ENCODE measurements at regions of chr4 and their contacts with region 1.

Region 1: DNA sequence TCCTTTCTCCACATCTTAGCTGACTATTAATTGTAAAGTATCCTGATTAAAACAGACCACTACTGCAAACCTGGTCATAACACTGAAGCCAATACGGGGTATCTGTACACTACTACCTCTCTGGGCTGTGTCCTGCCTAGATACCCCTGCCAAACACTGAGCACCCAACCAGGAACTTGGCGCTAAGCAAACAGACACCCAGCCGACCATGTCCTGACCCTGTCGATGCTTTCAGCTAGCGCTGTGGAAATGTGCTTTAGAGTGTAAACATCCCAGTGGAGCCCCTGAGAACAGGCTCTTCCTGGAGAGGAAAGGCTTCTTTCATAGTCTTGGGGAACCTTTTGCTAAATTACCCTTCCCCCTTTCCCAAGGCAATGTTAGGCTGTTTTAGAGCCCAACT is 52.9 kb downstream of the CCNG2 start:
- DNase-seq: no peak
- ATAC-seq: no peak
- H3K4me3 ChIP-seq: no peak overlapping the region
- H3K4me3 Mint-ChIP-seq: no peak overlapping the region
- H3K27ac ChIP-seq: no peak overlapping the region
- H3K27ac Mint-ChIP-seq: no peak overlapping the region
- H3K4me1 ChIP-seq: no peaks in the 10 kb centered on the region
- H3K4me1 Mint-ChIP-seq: no peaks in the 10 kb centered on the region
- H3K27me3 ChIP-seq: no peaks in the 10 kb centered on the region
- H3K27me3 Mint-ChIP-seq: no peaks in the 10 kb centered on the region
- CTCF ChIP-seq: no peak

Region 2: DNA sequence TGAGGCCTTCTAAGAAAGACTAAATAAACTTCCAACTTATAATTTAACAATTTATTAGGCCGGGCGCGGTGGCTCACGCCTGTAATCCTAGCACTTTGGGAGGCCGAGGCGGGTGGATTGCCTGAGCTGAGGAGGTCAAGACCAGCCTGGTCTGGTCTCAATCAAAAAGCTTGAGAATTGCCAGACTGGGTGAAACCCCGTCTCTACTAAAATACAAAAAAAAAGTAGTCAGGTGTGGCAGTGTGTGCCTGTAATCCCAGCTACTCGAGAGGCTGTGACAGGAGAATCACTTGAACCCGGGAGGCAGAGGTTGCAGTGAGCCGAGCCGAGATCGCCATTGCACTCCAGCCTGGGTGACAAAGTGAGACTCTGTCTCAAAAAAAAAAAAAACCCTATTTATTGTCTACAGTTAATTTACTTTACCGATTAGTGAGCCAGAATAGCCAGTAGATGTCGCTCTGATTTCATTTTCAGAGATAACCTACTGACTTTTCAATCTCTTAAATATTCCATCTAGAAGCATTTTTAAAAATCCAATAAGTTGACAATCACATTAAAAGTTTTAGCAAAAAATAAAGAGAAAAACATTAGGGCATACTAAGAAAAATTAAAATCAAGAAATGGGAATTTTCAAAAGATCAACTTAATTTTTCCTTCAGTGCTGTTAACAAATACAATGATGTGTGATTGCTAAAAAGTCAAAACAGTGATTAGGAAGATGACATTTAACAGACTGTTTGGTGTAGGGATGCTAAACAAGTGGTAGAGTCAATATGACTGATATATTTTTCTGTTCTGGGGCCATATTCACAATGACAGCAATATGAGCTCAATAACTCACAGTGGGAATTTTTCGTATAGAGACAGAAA is 779.2 kb before region 1 on chr4:
- CTCF ChIA-PET with region 1: no interaction called
- POLR2A ChIA-PET with region 1: no interaction called
- intact Hi-C with region 1: loop called in 1 of 2 experiments (anchors 2 kb)
- DNase-seq: peak in 4 of 14 experiments; percentile 3 to 57 (median 40)
- ATAC-seq: no peak
- H3K4me3 ChIP-seq: no peak overlapping the region
- H3K4me3 Mint-ChIP-seq: no peak overlapping the region
- H3K27ac ChIP-seq: no peak overlapping the region
- H3K27ac Mint-ChIP-seq: no peak overlapping the region
- H3K4me1 ChIP-seq: peaks cover 3% of the 10 kb centered on the region
- H3K4me1 Mint-ChIP-seq: no peaks in the 10 kb centered on the region
- H3K27me3 ChIP-seq: peaks cover 2 to 8% of the 10 kb centered on the region in 2 experiments
- H3K27me3 Mint-ChIP-seq: peaks cover 16% of the 10 kb centered on the region
- CTCF ChIP-seq: peak; percentile 79

Region 3: GRCh38 chr4:77036206-77036605 is 173.7 kb before region 1 on chr4:
- CTCF ChIA-PET with region 1: no interaction called
- POLR2A ChIA-PET with region 1: no interaction called
- intact Hi-C with region 1: no loop called
- DNase-seq: no peak
- ATAC-seq: no peak
- H3K4me3 ChIP-seq: no peak overlapping the region
- H3K4me3 Mint-ChIP-seq: no peak overlapping the region
- H3K27ac ChIP-seq: no peak overlapping the region
- H3K27ac Mint-ChIP-seq: no peak overlapping the region
- H3K4me1 ChIP-seq: peaks cover 11% of the 10 kb centered on the region
- H3K4me1 Mint-ChIP-seq: peaks cover 15% of the 10 kb centered on the region
- H3K27me3 ChIP-seq: no peaks in the 10 kb centered on the region
- H3K27me3 Mint-ChIP-seq: no peaks in the 10 kb centered on the region
- CTCF ChIP-seq: no peak

Region 4: DNA sequence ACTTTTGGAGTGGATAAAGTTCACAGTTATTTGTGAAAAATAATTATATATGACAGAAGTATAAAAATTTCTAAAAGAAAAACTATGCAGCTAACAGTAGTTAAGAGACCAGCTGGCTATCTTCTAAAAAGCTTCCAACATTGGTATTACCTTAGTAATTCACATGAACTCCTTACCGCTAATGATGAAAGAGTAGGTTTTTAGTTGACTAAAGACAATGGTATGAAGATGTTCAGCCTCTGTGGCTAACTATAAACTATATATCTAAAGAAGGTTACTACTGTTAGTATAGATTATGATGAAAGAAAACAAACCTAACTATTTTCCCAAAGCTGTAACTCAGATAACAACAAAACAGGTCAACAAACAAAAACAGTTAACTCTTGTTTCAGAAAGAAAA is 144.6 kb before region 1 on chr4:
- CTCF ChIA-PET with region 1: no interaction called
- POLR2A ChIA-PET with region 1: no interaction called
- intact Hi-C with region 1: no loop called
- DNase-seq: no peak
- ATAC-seq: no peak
- H3K4me3 ChIP-seq: no peak overlapping the region
- H3K4me3 Mint-ChIP-seq: no peak overlapping the region
- H3K27ac ChIP-seq: no peak overlapping the region
- H3K27ac Mint-ChIP-seq: peak overlapping the region; percentile 51
- H3K4me1 ChIP-seq: peaks cover 12% of the 10 kb centered on the region
- H3K4me1 Mint-ChIP-seq: peaks cover 50% of the 10 kb centered on the region
- H3K27me3 ChIP-seq: no peaks in the 10 kb centered on the region
- H3K27me3 Mint-ChIP-seq: no peaks in the 10 kb centered on the region
- CTCF ChIP-seq: no peak

Region 5: DNA sequence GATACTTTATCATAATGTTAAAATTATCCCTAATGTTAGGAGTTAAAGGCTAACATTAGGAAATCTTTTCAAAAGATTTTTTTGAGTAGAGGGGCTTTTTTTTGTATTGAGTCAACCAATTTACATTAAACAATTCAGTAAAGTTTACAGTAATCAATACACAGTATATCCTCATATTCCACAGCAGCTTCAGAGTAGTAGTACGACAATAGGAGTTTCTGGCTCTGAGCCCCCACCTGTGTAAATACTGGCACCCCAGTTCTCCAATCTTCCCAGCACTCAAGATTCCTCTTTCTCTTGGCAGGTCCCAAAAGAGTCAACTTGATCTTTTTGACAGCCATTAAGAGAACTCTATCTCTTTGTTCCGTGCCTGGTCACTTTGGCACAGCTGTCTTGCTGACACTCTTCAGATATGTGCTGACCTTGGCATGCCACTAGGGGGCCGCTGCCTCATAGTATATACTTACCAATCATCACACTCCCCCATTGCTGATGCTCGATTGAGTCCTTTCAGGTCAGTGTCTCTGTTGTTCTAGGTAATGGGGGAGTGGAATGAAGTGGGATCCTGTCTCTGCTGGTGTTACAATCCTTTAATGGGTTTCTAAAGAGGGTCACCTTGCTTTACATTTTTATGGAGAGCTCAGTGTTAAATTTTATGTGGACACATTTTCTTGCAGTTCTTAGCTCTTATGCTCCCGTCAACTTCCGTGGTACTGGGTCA is 114.7 kb before region 1 on chr4:
- CTCF ChIA-PET with region 1: no interaction called
- POLR2A ChIA-PET with region 1: no interaction called
- intact Hi-C with region 1: no loop called
- DNase-seq: peak; percentile 40 to 82 (median 65)
- ATAC-seq: peak; percentile 87
- H3K4me3 ChIP-seq: no peak overlapping the region
- H3K4me3 Mint-ChIP-seq: no peak overlapping the region
- H3K27ac ChIP-seq: no peak overlapping the region
- H3K27ac Mint-ChIP-seq: no peak overlapping the region
- H3K4me1 ChIP-seq: peaks cover 3% of the 10 kb centered on the region
- H3K4me1 Mint-ChIP-seq: peaks cover 19% of the 10 kb centered on the region
- H3K27me3 ChIP-seq: no peaks in the 10 kb centered on the region
- H3K27me3 Mint-ChIP-seq: no peaks in the 10 kb centered on the region
- CTCF ChIP-seq: peak; percentile 65